GM23248 (cell line): ENCODE measurements at regions of chr6 and their contacts with region 1.

Region 1: GRCh38 chr6:35139908-35140655 is 1.1 kb downstream of the TCP11 start:
- DNase-seq: peak; percentile 74
- H3K4me3 ChIP-seq: no peak overlapping the region
- H3K27ac ChIP-seq: no peak overlapping the region
- H3K4me1 ChIP-seq: peaks cover 10% of the 10 kb centered on the region
- H3K27me3 ChIP-seq: no peaks in the 10 kb centered on the region

Region 2: GRCh38 chr6:34986845-34987246 is 153.2 kb before region 1 on chr6:
- in situ Hi-C with region 1: loop called (anchors 10 kb)
- DNase-seq: peak; percentile 90
- H3K4me3 ChIP-seq: no peak overlapping the region
- H3K27ac ChIP-seq: no peak overlapping the region
- H3K4me1 ChIP-seq: peaks cover 14% of the 10 kb centered on the region
- H3K27me3 ChIP-seq: no peaks in the 10 kb centered on the region

Region 3: DNA sequence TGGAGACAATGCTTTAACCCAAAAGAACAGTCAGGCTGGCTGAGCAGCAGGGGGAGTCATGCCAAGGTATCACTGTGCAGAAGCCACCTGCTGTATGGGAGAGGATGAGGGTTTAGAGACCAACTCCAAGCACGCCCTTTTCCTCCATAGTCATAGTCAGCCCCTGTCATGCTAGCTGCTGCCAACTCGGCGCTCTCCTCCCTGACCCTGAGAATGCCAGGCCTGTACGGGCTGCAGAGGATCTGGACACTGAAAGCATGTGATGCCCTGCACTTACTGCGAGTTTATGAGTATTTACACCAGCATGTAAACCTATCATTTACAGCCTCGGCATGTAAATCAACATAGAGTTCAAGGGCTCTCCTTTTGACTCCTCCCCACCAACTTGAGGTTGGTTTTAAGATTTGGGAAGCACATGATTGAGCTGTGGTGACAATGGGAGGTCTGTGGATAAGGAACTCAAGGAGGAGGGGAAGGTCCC is 62.0 kb after region 1 on chr6:
- in situ Hi-C with region 1: loop called (anchors 10 kb)
- DNase-seq: no peak
- H3K4me3 ChIP-seq: no peak overlapping the region
- H3K27ac ChIP-seq: no peak overlapping the region
- H3K4me1 ChIP-seq: peaks cover 40% of the 10 kb centered on the region
- H3K27me3 ChIP-seq: no peaks in the 10 kb centered on the region